OCI-LY7 (cell line): ENCODE measurements at regions of chr3 and their contacts with region 1.

Region 1: DNA sequence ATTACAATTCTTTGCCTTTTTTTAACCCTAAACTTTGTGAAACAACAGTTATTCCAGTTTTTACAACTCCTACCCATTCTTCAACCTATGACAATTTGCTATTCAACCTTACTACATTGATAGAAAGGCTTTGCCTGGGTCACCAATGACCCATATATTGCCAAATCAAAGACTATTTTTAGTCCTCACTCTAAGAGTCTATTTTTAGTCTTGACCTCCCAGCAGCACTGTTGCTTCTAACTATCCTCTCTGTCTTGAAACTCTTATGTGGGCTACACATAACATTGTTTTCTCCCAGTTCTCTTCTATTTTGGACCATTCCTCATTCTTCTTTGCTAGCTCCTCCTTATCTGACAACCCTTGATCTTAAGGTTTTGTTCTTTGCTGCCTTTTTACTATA is 71.4 kb downstream of the C3orf80 start:
- DNase-seq: no peak
- H3K4me3 ChIP-seq: no peak overlapping the region
- H3K27ac ChIP-seq: no peak overlapping the region
- H3K4me1 ChIP-seq: no peaks in the 10 kb centered on the region
- CTCF ChIP-seq: no peak

Region 2: DNA sequence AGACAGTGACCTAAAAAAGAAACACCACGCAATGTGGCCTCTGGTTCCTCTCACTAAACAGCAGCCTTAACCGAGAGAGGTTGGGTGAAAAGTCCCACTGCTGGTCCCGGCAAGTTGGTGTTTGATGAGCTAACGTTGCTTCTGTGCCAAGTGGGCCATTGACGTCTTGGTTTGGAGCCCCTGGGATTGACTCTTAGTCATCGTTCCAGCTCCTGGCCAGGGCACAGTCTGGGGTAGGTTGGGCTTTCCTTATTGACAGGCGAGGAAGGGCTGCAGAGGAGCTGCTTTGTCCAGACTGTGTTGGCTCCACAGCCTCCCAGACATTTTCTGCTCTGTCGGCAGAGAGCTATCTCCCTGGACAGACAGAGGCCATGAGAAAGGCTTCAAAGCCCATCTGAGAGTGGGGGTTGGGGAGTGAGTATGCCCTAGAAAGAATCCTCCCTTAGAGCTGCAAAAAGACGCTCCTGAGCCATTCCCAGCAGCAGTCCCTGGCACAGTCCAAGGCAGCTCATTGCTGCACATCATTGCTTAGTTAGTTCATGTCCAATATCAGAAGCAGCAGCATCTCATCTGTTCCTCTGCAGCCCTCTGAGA is 100.0 kb before region 1 on chr3:
- CTCF ChIA-PET with region 1: no interaction called
- POLR2A ChIA-PET with region 1: no interaction called
- intact Hi-C with region 1: no loop called
- DNase-seq: no peak
- H3K4me3 ChIP-seq: no peak overlapping the region
- H3K27ac ChIP-seq: no peak overlapping the region
- H3K4me1 ChIP-seq: no peaks in the 10 kb centered on the region
- CTCF ChIP-seq: no peak

Region 3: GRCh38 chr3:160331127-160331937 is 34.7 kb after region 1 on chr3:
- CTCF ChIA-PET with region 1: no interaction called
- POLR2A ChIA-PET with region 1: no interaction called
- intact Hi-C with region 1: loop called (anchors 5 kb)
- DNase-seq: no peak
- H3K4me3 ChIP-seq: no peak overlapping the region
- H3K27ac ChIP-seq: no peak overlapping the region
- H3K4me1 ChIP-seq: no peaks in the 10 kb centered on the region
- CTCF ChIP-seq: no peak

Region 4: DNA sequence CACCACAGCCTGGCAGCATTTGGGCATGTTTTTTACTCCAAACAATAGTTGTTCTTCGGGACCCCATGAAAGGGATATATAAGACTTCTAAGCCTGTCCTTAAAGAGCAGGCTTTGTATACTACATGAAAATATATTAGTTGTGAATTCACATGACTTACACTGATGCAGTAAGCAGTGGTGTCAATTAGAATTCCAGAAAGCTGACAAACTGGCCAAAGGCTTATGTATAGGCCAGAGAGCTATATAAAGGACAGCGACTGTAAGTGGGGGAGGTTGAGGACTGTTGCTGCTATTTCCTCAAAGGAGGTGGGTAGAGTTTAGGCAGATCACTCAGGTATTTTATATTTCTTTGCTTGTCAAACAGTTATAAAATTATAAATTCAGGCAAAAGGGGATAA is 244.0 kb after region 1 on chr3:
- CTCF ChIA-PET with region 1: no interaction called
- POLR2A ChIA-PET with region 1: no interaction called
- intact Hi-C with region 1: no loop called
- DNase-seq: no peak
- H3K4me3 ChIP-seq: no peak overlapping the region
- H3K27ac ChIP-seq: no peak overlapping the region
- H3K4me1 ChIP-seq: no peaks in the 10 kb centered on the region
- CTCF ChIP-seq: no peak